CD4-positive, alpha-beta memory T cell (primary cell): ENCODE measurements at regions of chrX and their contacts with region 1.

Region 1: DNA sequence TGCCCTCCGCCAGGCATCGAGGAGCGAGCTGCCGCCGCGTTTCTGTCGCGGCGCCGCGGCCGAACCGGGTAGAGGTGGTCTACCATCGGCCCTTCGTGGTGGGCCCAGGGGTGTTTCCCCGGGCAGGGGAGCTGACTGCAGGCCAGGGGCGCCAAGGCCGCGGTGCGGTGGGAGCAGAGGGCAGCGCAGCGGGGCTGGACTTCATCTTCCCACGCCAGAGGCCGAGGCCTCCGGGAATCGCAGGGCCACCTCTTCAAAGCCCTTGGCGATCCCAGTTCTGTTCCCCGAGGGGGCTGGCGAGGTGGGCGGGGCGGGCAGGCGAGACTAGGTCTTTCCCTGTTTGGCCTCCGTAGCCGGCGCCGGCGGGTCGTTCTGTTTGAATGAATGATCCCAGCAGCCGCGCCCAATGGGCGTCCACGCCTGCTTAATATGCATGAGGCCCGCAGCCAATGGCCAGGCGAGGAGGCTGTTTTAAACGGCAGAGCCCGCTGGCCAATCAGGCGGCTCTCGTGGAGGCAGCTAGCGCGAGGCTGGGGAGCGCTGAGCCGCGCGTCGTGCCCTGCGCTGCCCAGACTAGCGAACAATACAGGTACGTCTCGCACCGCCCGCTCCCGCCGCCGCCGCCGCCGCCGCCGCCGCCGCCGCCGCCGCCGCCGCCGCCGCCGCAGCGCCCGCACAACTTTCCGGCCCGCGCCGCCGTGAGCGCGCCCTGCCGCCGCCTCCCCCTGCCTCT is at the start of gene HMGB3:
- DNase-seq: peak; percentile 66 to 88 (median 73)
- H3K4me3 ChIP-seq: peak within 1 kb of the TSS in 1 of 2 donors; percentile 50
- H3K4me3 Mint-ChIP-seq: peak within 1 kb of the TSS; percentile 72 to 84 (median 76)
- H3K27ac ChIP-seq: no peak within 1 kb of the TSS
- H3K27ac Mint-ChIP-seq: peak within 1 kb of the TSS in 2 of 7 donors; percentile 39 to 63
- H3K4me1 ChIP-seq: peaks cover 8% of the 10 kb centered on the region
- H3K4me1 Mint-ChIP-seq: peaks cover 0 to 12% (median 2%) of the 10 kb centered on the region in 4 donors
- H3K27me3 ChIP-seq: no peaks in the 10 kb centered on the region
- H3K27me3 Mint-ChIP-seq: no peaks in the 10 kb centered on the region
- total RNA-seq, gene HMGB3: 1.7 to 1.9 TPM

Region 2: DNA sequence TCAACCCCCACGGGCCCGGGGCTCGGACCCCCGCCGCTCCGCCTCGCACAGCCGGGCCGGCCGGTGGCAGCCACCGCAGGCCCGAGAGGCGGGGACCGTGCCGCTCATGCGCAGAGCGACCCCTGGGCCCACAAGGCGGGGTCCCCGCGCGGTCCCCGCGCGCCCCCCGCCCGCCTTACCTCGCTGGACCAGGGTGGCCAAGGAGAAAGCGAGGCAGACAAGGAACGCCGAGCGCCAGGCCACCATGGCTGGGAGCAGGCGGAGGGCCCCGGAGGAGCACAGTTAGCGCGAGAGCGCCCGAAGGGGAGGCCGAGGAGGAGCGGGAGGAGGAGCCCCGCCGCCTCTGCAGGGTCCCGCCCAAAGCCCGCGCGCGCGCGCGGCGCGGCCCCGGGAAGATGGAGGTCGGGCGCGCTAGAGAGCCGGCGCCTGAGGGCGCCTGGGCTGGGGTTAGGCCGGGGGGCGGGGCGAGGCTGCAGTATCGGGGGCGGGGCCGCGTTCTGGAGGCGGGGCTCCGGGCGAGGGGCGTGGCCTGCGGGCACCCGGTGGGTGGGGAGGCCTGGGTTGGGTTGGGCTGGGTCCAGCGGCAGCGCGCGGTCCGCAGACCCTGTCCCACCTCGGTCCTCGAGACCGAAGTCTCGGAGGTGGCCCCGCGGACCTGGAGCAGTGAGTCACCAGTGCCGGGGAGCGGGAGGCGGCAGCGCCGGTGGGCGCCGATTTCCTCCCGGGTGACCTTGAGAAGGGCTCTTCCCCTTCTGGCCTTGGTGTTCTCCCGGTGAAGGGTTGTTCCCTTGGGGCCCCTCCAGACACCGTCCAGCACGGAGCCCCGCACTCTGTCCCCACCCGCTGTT is 84.4 kb before region 1 on chrX and contains the start of gene CD99L2:
- CTCF ChIA-PET with region 1: no interaction called
- POLR2A ChIA-PET with region 1: no interaction called
- intact Hi-C with region 1: loop called (anchors 1 kb)
- DNase-seq: peak; percentile 85 to 86 (median 86)
- H3K4me3 ChIP-seq: peak within 1 kb of the TSS; percentile 47 to 56
- H3K4me3 Mint-ChIP-seq: peak within 1 kb of the TSS; percentile 87 to 95 (median 91)
- H3K27ac ChIP-seq: peak within 1 kb of the TSS; percentile 66
- H3K27ac Mint-ChIP-seq: peak within 1 kb of the TSS; percentile 53 to 94 (median 84)
- H3K4me1 ChIP-seq: peaks cover 9% of the 10 kb centered on the region
- H3K4me1 Mint-ChIP-seq: peaks cover 3 to 16% (median 5%) of the 10 kb centered on the region in 4 donors
- H3K27me3 ChIP-seq: no peaks in the 10 kb centered on the region
- H3K27me3 Mint-ChIP-seq: no peaks in the 10 kb centered on the region
- total RNA-seq, gene CD99L2: 15.5 to 17.3 TPM